GM10248 (cell line): ENCODE measurements at regions of chr3 and their contacts with region 1.

Region 1: DNA sequence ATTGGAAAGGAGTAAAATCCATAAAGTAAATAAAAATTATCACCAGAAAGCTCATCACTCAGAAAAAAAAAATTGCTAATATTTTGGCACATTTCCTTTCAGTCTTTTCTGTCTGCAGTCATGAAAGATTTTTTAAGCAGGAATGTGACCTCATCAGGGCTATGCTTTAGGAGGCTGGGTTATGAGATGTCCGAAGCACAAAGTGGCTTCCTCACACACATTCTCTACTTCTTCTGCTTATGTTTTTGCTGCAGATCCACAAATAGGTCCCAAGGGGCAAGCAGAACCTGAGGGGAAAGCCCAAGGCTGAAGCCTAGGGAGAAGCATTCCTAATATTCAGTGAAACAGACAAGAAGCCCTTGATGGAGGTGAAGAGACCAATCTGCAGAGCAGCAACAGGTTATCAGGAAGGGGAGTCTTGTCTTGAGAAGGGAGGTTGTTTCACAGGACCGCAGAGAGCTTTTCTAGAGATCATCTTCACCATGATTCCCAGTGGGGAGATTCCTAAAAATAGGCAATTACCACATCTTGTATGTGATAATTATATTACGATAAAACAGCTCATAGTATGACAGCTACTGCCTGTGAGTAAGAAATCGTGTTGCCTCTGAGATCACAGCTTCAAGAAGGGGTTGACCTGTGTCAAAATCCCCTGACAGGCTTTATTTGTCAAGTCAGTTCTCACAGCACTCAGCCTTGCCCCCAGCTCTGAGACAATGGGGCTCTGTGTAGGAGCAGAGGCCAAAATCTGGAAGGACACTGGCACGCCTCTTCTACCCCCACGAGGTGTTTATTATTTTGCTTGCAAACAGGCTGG is 60.5 kb downstream of the IGF2BP2 start:
- DNase-seq: no peak
- CTCF ChIP-seq: no peak

Region 2: GRCh38 chr3:185677146-185677829 is 87.1 kb before region 1 on chr3:
- CTCF ChIA-PET with region 1: interaction called, 39 read pairs
- POLR2A ChIA-PET with region 1: no interaction called
- DNase-seq: peak; percentile 58
- CTCF ChIP-seq: peak; percentile 57

Region 3: DNA sequence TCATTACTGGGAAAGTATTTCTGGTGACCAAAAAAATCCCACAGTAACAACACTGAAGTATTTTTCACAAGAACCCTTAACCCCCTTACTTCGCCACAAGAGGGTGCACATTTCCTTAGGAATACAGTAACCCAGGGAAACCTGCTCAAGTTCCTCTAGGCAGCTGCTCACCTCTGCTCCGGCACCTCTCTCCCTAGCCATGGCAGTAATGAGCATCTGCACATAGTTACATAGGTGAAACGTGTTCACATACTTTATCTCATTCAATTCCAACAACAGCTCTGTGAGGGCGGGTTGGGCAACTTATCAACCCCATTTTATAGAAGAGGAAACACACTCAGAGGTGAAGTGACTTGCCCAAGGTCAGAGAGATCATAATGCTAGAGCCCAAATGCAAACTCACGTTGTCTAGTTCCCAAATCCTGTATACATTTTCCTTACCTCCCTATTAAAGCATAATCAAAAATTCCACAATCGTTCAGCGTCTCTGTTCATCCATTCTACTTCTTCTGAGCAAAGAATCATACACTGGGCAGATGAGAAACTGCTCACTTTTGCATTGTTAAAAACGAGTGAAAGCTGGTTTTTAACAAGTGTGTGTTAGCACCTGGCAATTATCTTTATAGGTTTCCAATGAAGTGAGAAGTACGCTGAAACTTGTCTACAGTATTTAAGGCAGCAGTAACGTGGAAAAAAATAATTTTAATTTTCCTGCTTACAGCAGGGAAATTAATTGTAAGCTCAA is 30.2 kb before region 1 on chr3:
- CTCF ChIA-PET with region 1: interaction called, 91 read pairs
- POLR2A ChIA-PET with region 1: no interaction called
- DNase-seq: peak; percentile 62
- CTCF ChIP-seq: peak; percentile 51

Region 4: DNA sequence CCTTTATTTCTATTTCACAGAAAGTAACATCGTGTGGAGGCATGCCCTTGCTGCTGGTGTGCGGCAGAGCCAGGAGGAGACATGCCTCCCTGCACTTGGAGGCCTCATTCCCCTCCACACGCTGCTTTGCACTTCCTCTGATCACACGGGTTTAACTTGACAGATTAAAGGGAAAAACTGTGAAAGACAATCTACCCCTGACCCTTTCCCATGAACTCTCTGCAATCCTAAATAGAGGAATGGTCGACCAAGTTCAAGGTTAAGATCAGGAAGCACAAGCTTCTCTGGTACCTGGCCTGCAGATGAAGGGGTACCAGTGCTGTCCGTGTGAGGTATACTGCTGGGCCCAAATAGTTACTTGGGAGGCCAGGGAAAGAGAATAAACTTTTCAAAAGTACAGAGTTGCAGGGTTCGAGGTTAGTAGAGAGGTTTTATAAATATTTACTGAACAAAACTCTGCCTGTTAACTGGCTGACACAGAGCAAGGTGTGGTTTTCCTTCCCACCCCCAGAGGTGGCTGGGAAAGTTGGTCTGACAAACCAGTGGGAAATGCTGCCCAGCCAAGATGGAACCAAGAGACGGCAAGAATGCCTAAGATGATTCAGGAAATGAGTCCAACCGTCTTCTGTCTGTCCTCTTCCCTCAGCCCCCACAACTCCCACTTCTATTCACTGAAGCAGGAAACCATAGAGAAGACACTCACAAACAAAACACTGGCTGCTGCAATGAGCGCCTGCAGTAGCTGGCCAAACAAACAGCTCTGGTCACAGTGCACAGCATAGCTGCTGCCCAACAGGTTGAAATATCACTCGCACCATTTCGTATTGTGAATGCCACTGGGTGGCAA is 19.2 kb before region 1 on chr3:
- CTCF ChIA-PET with region 1: interaction called, 28 read pairs
- POLR2A ChIA-PET with region 1: no interaction called
- DNase-seq: peak; percentile 34
- CTCF ChIP-seq: no peak

Region 5: GRCh38 chr3:185781759-185782158 is 17.4 kb after region 1 on chr3:
- CTCF ChIA-PET with region 1: interaction called, 58 read pairs
- POLR2A ChIA-PET with region 1: no interaction called
- DNase-seq: no peak
- CTCF ChIP-seq: no peak

Region 6: DNA sequence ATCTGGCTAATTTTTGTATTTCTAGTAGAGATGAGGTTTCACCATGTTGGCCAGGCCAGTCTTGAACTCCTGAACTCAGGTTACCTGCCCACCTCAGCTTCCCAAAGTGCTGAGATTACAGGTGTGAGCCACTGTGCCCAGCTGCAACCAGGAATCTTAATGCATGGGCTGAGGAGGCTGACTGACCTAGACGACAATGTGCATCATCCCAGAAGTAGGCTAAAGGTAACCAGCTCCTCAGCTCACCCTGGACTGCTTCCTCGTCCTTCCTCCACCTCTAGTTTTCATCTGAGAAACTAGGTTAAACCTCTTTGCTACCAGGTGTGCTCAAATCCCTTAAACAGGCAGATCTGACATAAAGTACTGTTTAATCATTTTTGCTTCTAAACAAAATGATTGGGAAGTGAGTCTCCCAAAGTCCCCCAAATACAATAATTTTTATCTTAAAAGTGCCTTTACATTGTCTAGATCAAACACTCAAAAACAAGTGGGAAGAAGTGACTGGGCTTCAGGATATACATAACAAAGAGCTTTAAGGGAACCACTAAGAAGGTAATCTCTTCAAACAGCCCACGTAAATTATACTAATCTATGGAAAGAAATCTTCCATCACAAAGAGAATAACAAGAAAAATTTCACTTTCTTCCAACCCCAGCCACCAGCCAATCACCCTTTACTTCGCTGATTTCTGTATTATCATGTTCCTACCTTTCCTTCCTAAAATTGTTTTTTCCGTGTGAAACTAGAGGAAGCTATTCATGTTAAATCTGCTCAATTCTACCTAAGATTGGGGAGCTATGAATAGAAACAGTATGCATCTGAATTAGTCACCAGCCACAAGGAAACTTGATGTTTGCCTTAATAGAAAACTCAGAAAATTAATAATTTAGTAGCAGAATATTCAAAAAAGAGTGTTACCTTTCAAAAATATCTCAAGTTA is 25.8 kb after region 1 on chr3:
- CTCF ChIA-PET with region 1: interaction called, 19 read pairs
- POLR2A ChIA-PET with region 1: no interaction called
- DNase-seq: no peak
- CTCF ChIP-seq: no peak